ENCODE measurements at regions of chr2 and their contacts with region 1.

Region 1: DNA sequence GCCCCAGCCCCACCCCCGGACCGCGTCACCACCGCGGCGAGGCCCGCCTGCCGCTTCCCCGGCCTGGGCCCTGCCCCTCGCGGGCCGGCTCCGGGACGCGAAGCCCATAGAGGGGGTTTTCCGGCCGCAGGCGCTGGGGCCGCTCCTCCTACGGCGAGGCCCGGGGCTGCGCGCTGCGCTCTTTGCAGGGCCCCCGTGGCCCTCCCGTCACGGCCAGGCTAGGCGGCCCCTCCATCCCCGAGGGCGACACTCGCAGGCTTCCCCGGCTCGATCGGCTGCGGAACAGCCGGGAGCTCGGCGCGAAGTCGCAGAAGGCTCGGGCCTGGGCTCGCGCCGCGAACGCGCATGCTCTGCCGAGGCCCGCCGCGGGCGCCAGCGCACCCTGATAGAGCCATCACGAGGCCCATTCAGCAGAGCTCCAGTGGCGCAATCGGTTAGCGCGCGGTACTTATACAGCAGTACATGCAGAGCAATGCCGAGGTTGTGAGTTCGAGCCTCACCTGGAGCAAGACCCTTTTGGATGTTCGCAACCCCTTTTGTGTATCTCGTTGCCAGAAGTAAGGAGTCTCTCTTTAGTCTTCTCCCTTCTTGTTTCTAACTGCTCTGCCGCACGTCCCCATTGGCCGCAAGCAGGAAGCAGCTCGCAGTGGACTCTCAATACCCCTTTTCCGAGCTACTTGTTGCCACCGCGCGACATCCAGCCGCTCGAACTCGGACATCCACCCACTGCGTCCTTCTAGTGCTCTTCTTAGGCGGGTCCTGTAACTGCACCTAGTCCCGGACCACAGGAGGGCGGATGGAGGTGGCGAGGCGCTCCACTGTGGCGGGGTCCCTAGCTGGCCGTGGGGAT is 18.0 kb upstream of the HAAO start:
- DNase-seq: peak; percentile 92 to 99 (median 96)
- ATAC-seq: peak; percentile 78
- H3K4me3 ChIP-seq: peak overlapping the region; percentile 89
- H3K4me3 Mint-ChIP-seq: peak overlapping the region; percentile 98
- H3K27ac ChIP-seq: peak overlapping the region; percentile 93
- H3K27ac Mint-ChIP-seq: peak overlapping the region; percentile 100
- H3K4me1 ChIP-seq: peaks cover 27% of the 10 kb centered on the region
- H3K4me1 Mint-ChIP-seq: peaks cover 30% of the 10 kb centered on the region
- H3K27me3 ChIP-seq: no peaks in the 10 kb centered on the region
- H3K27me3 Mint-ChIP-seq: peaks cover 7% of the 10 kb centered on the region
- CTCF ChIP-seq: no peak

Region 2: GRCh38 chr2:42360890-42361727 is 449.2 kb before region 1 on chr2 and contains the start of gene COX7A2L:
- CTCF ChIA-PET with region 1: no interaction called
- POLR2A ChIA-PET with region 1: interaction called, 5 read pairs
- intact Hi-C with region 1: loop called in 1 of 2 experiments (anchors 5 kb)
- DNase-seq: peak; percentile 93 to 98 (median 96)
- ATAC-seq: peak; percentile 91
- H3K4me3 ChIP-seq: peak within 1 kb of the TSS; percentile 88
- H3K4me3 Mint-ChIP-seq: peak within 1 kb of the TSS; percentile 88
- H3K27ac ChIP-seq: peak within 1 kb of the TSS; percentile 91 to 96
- H3K27ac Mint-ChIP-seq: peak within 1 kb of the TSS; percentile 99
- H3K4me1 ChIP-seq: peaks cover 34% of the 10 kb centered on the region
- H3K4me1 Mint-ChIP-seq: peaks cover 45% of the 10 kb centered on the region
- H3K27me3 ChIP-seq: no peaks in the 10 kb centered on the region
- H3K27me3 Mint-ChIP-seq: no peaks in the 10 kb centered on the region
- CTCF ChIP-seq: no peak
- total RNA-seq, gene COX7A2L: 51.3 to 57.3 TPM

Region 3: GRCh38 chr2:42755191-42755880 is 55.0 kb before region 1 on chr2:
- CTCF ChIA-PET with region 1: no interaction called
- POLR2A ChIA-PET with region 1: no interaction called
- intact Hi-C with region 1: no loop called
- DNase-seq: peak in 2 of 14 experiments; percentile 36 to 38
- ATAC-seq: no peak
- H3K4me3 ChIP-seq: no peak overlapping the region
- H3K4me3 Mint-ChIP-seq: no peak overlapping the region
- H3K27ac ChIP-seq: no peak overlapping the region
- H3K27ac Mint-ChIP-seq: no peak overlapping the region
- H3K4me1 ChIP-seq: peaks cover 4% of the 10 kb centered on the region
- H3K4me1 Mint-ChIP-seq: peaks cover 5% of the 10 kb centered on the region
- H3K27me3 ChIP-seq: no peaks in the 10 kb centered on the region
- H3K27me3 Mint-ChIP-seq: no peaks in the 10 kb centered on the region
- CTCF ChIP-seq: no peak

Region 4: GRCh38 chr2:42777883-42778805 is 32.2 kb before region 1 on chr2:
- CTCF ChIA-PET with region 1: no interaction called
- POLR2A ChIA-PET with region 1: interaction called, 24 read pairs
- intact Hi-C with region 1: no loop called
- DNase-seq: no peak
- ATAC-seq: no peak
- H3K4me3 ChIP-seq: no peak overlapping the region
- H3K4me3 Mint-ChIP-seq: no peak overlapping the region
- H3K27ac ChIP-seq: no peak overlapping the region
- H3K27ac Mint-ChIP-seq: no peak overlapping the region
- H3K4me1 ChIP-seq: peaks cover 8% of the 10 kb centered on the region
- H3K4me1 Mint-ChIP-seq: peaks cover 25% of the 10 kb centered on the region
- H3K27me3 ChIP-seq: no peaks in the 10 kb centered on the region
- H3K27me3 Mint-ChIP-seq: no peaks in the 10 kb centered on the region
- CTCF ChIP-seq: no peak

Region 5: GRCh38 chr2:42828487-42829425 is 18.4 kb after region 1 on chr2:
- CTCF ChIA-PET with region 1: interaction called, 7 read pairs
- POLR2A ChIA-PET with region 1: interaction called, 20 read pairs
- intact Hi-C with region 1: no loop called
- DNase-seq: peak; percentile 51 to 86 (median 60)
- ATAC-seq: peak; percentile 93
- H3K4me3 ChIP-seq: no peak overlapping the region
- H3K4me3 Mint-ChIP-seq: no peak overlapping the region
- H3K27ac ChIP-seq: no peak overlapping the region
- H3K27ac Mint-ChIP-seq: no peak overlapping the region
- H3K4me1 ChIP-seq: peaks cover 19% of the 10 kb centered on the region
- H3K4me1 Mint-ChIP-seq: peaks cover 18% of the 10 kb centered on the region
- H3K27me3 ChIP-seq: no peaks in the 10 kb centered on the region
- H3K27me3 Mint-ChIP-seq: peaks cover 6% of the 10 kb centered on the region
- CTCF ChIP-seq: peak; percentile 83

Region 6: DNA sequence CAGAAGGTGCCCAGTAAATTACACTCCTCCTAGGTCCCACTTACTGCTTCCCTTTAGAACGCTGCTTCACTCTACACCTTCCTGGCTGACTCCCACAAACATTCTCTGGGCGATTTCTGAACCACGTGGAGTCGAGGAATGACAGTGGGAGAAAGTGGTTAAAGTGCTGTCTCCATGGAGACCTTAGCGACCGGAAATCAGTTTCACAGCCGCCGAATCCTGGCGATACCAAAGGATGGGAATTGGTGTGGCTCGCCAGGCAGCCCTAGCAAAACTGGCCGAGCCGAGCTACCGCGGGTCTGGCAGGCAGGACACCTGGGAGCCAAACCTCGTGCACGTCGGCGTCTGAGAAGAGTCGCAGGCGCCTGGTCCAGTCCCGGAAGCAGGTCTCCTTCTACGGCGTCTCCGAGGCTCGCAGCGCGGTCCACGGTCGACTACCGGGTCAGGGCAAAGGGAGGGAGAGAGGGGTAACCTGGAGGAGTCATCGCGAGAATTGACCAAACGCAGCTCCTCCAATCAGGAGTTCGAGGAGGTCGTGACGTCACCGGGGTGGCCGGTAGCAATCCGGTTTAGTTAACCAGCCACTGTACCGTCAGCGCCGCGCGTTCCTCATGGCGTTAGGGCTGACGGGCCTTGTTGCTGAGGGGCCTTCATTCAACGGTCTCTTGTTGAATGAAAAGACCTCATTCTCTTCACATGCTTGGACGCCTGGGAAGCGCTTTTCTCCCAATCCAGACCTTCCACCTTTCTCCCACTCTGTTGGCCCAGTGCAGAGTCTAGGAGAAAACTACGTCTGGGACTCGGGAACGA is 785.5 kb after region 1 on chr2 and contains the start of gene THADA:
- CTCF ChIA-PET with region 1: no interaction called
- POLR2A ChIA-PET with region 1: interaction called, 22 read pairs
- intact Hi-C with region 1: loop called in 1 of 2 experiments (anchors 5 kb)
- DNase-seq: peak; percentile 90 to 98 (median 94)
- ATAC-seq: peak; percentile 90
- H3K4me3 ChIP-seq: peak within 1 kb of the TSS; percentile 84
- H3K4me3 Mint-ChIP-seq: peak within 1 kb of the TSS; percentile 97
- H3K27ac ChIP-seq: peak within 1 kb of the TSS; percentile 68 to 96
- H3K27ac Mint-ChIP-seq: peak within 1 kb of the TSS; percentile 93
- H3K4me1 ChIP-seq: peaks cover 21% of the 10 kb centered on the region
- H3K4me1 Mint-ChIP-seq: peaks cover 35% of the 10 kb centered on the region
- H3K27me3 ChIP-seq: no peaks in the 10 kb centered on the region
- H3K27me3 Mint-ChIP-seq: no peaks in the 10 kb centered on the region
- CTCF ChIP-seq: no peak
- total RNA-seq, gene THADA: 29.3 to 32.9 TPM

Region 7: DNA sequence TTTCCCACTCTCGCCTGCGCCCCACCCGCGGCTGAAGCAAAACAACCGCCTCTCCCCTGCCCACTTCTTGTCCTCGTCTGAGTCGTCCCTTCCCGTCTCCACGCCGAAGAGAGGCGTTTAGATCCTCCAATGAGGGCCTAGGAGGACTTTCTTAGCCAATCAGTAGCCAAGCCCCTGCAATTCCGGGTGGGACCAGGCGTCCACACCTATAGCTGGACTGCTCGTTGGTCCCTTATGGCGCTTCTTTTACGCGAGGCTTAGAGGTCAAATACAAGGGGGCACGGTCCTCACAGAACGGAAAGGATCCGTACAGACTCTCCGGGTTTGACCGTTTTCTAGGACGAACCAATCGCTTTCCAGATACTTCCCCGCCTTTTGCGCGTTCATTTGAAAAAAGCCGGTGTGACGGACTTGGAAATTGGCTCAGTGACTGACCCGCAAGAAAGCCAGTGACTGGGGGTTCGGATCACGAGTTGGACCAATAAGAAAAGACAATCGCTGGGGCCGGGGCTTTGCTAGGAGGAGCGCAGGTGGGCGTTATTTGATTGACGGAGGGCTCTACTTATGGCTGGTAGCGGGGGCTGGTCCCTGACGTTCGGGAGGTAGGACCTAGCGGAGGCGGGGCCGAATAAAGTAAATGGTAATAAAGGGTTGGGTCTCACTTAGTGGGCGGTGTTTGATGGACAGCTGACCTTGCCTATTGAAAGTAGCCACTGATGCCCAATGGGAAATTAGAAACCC is 1357.8 kb after region 1 on chr2:
- CTCF ChIA-PET with region 1: no interaction called
- POLR2A ChIA-PET with region 1: interaction called, 10 read pairs
- intact Hi-C with region 1: no loop called
- DNase-seq: peak in 13 of 14 experiments; percentile 91 to 100 (median 95)
- ATAC-seq: peak; percentile 78
- H3K4me3 ChIP-seq: peak overlapping the region; percentile 61
- H3K4me3 Mint-ChIP-seq: peak overlapping the region; percentile 99
- H3K27ac ChIP-seq: peak overlapping the region; percentile 98
- H3K27ac Mint-ChIP-seq: peak overlapping the region; percentile 99
- H3K4me1 ChIP-seq: peaks cover 20% of the 10 kb centered on the region
- H3K4me1 Mint-ChIP-seq: peaks cover 36% of the 10 kb centered on the region
- H3K27me3 ChIP-seq: no peaks in the 10 kb centered on the region
- H3K27me3 Mint-ChIP-seq: no peaks in the 10 kb centered on the region
- CTCF ChIP-seq: no peak